Dorsolateral prefrontal cortex (tissue), 120 donors: ENCODE measurements at regions of chr18 and their contacts with region 1.

Region 1: DNA sequence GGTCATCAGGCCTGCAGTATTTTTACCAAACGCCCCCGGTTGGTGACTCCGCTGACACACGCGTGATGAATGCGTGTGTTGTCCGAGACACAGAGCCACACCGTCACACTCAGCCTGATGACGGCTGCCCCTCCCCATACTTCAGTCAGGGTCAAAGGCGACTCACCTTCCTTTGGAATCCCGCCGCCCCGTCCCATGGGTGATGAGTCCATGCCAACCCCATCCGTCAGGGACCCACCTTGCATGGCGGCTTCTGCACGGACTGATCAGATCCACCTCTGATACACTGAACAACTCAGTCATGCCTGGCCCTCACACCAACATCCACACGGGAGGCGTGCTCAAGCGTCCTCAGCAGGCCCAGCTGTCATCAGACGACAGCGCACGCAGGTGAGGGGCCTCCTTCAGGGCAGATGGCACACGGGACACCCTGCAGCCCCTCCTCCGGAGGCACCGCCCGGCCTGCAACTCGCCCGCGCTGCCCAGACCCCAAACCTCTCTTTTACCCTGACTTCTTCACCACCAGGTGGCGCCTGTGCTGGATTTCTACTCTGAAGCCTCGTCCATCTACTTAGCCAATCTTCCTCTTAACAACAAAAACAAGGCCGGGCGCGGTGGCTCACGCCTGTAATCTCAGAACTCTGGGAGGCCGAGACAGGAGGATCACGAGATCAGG is 89.2 kb downstream of the ZNF516 start:
- DNase-seq: peak in 2 of 10 donors; percentile 21 to 62
- H3K4me3 ChIP-seq: no peak overlapping the region
- H3K27ac ChIP-seq: no peak overlapping the region
- H3K27me3 ChIP-seq: no peaks in the 10 kb centered on the region
- CTCF ChIP-seq: peak in 53 of 56 donors; percentile 15 to 72 (median 57)

Region 2: GRCh38 chr18:76380791-76381405 is 24.9 kb before region 1 on chr18:
- intact Hi-C with region 1: no loop called
- DNase-seq: peak in 1 of 10 donors; percentile 21
- H3K4me3 ChIP-seq: no peak overlapping the region
- H3K27ac ChIP-seq: no peak overlapping the region
- H3K27me3 ChIP-seq: no peaks in the 10 kb centered on the region
- CTCF ChIP-seq: peak in 21 of 56 donors; percentile 8 to 43 (median 20)

Region 3: DNA sequence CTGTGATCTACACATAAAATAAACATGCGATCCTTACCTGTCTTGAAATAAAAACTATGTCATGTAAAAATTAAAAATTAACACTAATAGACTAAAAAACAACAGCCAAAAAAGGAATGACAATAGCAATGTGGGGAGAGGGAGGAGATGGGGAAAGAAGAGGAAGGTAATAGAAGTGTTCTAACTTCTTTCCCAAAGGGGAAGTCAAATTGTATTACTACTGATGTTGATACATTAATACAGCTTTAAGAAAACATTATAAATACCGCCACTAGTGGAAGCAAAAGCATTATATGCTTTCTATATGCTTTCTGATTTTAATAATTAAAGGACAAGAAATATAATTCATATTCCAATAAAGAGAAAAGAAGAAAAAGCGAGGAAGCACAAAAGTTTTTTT is 67.0 kb after region 1 on chr18:
- intact Hi-C with region 1: loop called in 1 of 2 experiments (anchors 2 kb)
- DNase-seq: no peak
- H3K4me3 ChIP-seq: no peak overlapping the region
- H3K27ac ChIP-seq: no peak overlapping the region
- H3K27me3 ChIP-seq: peaks cover 0 to 43% (median 0%) of the 10 kb centered on the region in 45 donors
- CTCF ChIP-seq: no peak

Region 4: DNA sequence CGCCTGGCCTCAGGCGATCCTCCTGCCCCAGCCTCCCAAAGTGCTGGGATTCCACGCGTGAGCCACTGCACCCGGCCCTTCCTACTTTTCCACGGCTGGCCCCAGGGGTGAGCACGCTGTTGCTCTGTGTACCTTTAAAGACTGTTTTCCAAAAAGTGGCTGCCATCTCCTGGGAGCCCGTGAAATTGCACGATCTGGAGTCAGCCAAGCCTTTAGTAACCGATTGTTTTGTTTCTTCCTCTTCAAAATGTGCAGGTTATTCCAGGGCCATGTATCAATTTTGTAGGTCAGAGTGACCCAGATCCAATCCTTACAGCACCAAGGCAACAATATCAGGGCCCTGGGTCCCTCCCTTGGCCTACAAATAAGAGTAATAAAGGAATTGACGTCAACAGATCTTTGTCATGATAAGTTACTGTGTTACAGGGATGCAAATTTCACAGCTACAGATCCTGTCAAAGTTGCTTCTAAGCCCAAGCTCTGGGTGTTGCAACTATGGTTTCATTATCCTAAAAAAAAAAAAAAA is 281.0 kb after region 1 on chr18:
- intact Hi-C with region 1: loop called in 1 of 2 experiments (anchors 5 kb)
- DNase-seq: peak in 7 of 10 donors; percentile 14 to 76 (median 57)
- H3K4me3 ChIP-seq: no peak overlapping the region
- H3K27ac ChIP-seq: peak overlapping the region in 2 of 59 donors; percentile 37 to 45
- H3K27me3 ChIP-seq: peaks cover 0 to 41% (median 0%) of the 10 kb centered on the region in 45 donors
- CTCF ChIP-seq: peak; percentile 30 to 76 (median 58)

Region 5: GRCh38 chr18:76709659-76710645 is 304.1 kb after region 1 on chr18:
- intact Hi-C with region 1: loop called in 1 of 2 experiments (anchors 5 kb)
- DNase-seq: peak; percentile 36 to 74 (median 67)
- H3K4me3 ChIP-seq: peak overlapping the region in 20 of 59 donors; percentile 2 to 47 (median 29)
- H3K27ac ChIP-seq: no peak overlapping the region
- H3K27me3 ChIP-seq: peaks cover 0 to 3% (median 0%) of the 10 kb centered on the region in 45 donors
- CTCF ChIP-seq: peak; percentile 74 to 96 (median 86)